Activated T-helper 1 cell treated with anti-CD3 and anti-CD28 coated beads, Interleukin-12 subunit alpha, Interleukin-12 subunit beta, Interleukin-2, Interleukin-4 antibody, amounts not matched to agents 30 ng/mL and 10 ng/mL and 1 ng/mL, durations not matched to agents 14 hours and 24 hours and 36 hours (primary cell): ENCODE measurements at regions of chr4 and their contacts with region 1.

Region 1: DNA sequence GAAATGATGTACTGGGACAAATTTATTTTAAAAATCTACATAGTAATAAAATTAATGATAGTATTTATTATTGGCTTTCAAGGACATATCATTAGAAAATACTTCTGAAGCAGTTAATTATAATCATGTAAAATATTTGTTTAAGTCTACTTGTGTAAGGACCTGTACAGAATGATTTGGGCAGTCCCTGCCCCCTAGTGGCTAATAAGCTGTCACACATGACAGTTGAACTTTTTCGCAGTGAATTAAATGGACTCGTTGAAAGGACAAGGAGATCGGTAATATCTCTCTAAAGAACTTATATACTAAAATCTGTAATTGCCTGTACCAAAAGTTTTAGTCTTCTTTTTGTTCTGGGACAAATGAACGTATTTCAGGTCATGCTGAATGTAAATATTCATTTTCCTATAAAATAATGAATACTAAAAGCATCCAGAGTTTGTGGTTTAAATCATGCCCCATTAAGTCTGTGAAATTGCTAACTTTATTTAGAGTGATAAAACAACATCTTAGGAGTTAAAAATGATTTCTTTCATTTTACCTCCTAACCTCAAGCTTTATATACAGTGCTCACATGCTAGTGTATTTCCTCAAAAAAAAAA is 13.6 kb downstream of the EXOC1 start:
- DNase-seq: no peak
- H3K4me3 Mint-ChIP-seq: no peak overlapping the region
- H3K27ac Mint-ChIP-seq: peak overlapping the region; percentile 24
- H3K4me1 Mint-ChIP-seq: peaks cover 21% of the 10 kb centered on the region
- H3K27me3 Mint-ChIP-seq: no peaks in the 10 kb centered on the region

Region 2: GRCh38 chr4:54971474-54971950 is 895.6 kb before region 1 on chr4:
- intact Hi-C with region 1: loop called (anchors 2 kb)
- DNase-seq: no peak
- H3K4me3 Mint-ChIP-seq: no peak overlapping the region
- H3K27ac Mint-ChIP-seq: no peak overlapping the region
- H3K4me1 Mint-ChIP-seq: no peaks in the 10 kb centered on the region
- H3K27me3 Mint-ChIP-seq: no peaks in the 10 kb centered on the region

Region 3: DNA sequence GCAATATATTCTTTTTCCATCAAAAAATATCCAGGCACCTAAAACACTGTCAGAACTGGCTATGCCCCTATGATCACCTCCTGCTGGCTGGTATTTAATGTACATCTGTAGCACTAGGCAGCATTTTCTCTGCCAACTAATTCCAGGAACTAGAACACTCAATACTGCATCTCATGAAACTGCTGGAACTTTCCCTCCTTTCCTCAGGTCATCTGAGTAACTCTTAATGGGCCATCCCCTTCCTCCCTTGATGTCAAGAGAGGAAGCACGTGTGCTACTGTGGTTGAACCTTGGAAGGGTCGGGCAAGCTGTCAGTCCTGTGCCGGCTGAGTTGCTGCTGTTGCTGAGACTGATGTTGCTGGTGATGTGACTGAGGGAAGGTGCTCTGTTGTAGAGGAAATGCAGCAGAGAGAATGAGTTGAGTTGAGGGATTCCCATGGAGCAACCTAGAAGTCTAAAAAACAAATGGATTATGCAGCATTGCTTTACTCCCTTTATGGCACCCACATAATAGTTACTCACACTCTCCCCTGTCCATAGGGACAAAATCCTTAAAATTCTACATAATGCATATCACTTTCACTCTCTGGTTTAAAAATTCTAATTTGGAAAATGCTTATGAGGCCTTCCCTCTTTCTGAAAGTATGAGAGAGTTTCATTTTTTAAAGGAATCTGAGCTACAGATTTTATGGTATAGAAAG is 431.8 kb before region 1 on chr4:
- intact Hi-C with region 1: loop called (anchors 5 kb)
- DNase-seq: peak; percentile 1
- H3K4me3 Mint-ChIP-seq: no peak overlapping the region
- H3K27ac Mint-ChIP-seq: peak overlapping the region; percentile 7
- H3K4me1 Mint-ChIP-seq: peaks cover 14% of the 10 kb centered on the region
- H3K27me3 Mint-ChIP-seq: no peaks in the 10 kb centered on the region

Region 4: DNA sequence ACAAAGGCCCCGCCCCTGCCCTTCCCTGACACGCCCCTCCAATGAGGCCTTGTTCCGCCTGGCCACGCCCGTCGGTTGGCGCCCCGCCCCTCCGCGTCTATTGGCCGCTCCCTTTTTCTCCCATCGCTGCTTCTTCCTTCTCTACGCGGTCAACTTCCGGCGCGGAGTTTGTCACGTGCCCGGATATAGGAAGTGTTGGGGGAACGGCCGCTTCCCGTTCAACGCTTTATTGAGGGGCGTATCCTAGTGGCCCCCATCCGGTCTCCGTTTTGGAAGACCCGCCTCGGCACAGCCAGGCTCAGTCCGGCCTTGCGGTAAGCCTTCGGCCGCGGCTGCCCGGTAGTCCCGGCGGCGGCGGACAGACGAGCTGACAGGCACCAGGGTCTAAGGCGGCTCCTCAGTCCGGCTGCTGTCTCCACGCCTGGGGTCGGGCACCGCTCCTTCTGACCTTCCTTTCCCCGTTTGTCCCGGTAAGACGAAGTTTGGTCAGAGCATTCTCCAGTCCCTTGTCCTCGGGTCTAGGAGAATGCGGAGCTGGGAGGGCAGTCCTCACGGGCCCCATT is 13.5 kb before region 1 on chr4 and contains the start of gene EXOC1:
- intact Hi-C with region 1: loop called (anchors 1 kb)
- DNase-seq: peak; percentile 93
- H3K4me3 Mint-ChIP-seq: peak within 1 kb of the TSS; percentile 37
- H3K27ac Mint-ChIP-seq: peak within 1 kb of the TSS; percentile 53
- H3K4me1 Mint-ChIP-seq: peaks cover 27% of the 10 kb centered on the region
- H3K27me3 Mint-ChIP-seq: peaks cover 2% of the 10 kb centered on the region
- total RNA-seq, gene EXOC1: 18.3 and 18.8 TPM in 2 replicates

Region 5: DNA sequence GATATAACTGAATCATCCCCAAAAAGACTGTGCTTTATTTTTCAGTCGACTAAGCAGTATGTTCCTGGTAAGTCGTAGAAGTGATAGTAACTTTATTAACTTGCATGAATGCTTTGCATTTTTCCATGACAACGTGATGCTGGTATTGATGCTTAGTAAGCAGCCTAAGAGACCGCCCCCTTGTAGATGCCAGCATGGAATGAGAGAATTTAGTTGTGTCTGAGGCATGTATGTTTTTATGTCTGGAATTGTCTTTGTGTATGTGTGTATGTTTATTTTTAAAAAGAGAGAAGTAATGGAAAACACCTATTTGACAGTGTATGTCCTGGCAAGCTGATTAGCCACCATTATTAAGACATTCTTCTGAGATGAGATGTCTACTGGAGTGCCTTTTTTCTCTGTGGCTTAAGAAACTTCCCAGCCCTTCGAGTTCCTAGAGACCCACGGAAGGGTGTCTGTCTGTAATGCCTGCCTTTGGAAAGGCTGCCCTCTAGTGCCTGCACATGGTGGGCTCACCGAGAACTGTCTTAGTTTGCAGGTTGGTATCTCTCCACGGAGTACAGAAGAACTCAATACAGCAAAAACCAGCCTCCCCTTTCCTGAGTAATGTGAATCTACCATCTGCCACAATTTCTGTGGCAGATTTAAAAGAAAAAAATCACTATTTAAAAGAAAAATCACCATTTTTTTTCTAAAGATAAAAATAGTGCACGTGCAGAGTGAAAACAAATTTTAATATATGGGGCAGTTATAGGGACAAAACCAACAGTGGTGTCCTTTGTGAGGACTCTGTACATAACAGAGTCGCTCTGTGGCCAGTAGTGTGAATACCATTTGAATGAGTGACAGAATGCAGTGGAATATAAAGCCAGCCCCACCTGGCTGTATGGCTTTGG is 434.4 kb after region 1 on chr4:
- intact Hi-C with region 1: loop called (anchors 5 kb)
- DNase-seq: peak; percentile 49
- H3K4me3 Mint-ChIP-seq: peak overlapping the region; percentile 38
- H3K27ac Mint-ChIP-seq: no peak overlapping the region
- H3K4me1 Mint-ChIP-seq: peaks cover 11% of the 10 kb centered on the region
- H3K27me3 Mint-ChIP-seq: peaks cover 2% of the 10 kb centered on the region